ENCODE measurements at regions of chr12 and their contacts with region 1.

Region 1: GRCh38 chr12:54993161-54993835 is 8.7 kb upstream of the TESPA1 start:
- DNase-seq: peak; percentile 72
- H3K4me3 Mint-ChIP-seq: no peak overlapping the region
- H3K27ac Mint-ChIP-seq: no peak overlapping the region
- H3K4me1 Mint-ChIP-seq: peaks cover 41% of the 10 kb centered on the region
- H3K27me3 Mint-ChIP-seq: no peaks in the 10 kb centered on the region

Region 2: GRCh38 chr12:54631988-54632728 is 361.1 kb before region 1 on chr12:
- CTCF ChIA-PET with region 1: no interaction called
- intact Hi-C with region 1: no loop called
- DNase-seq: no peak
- H3K4me3 Mint-ChIP-seq: no peak overlapping the region
- H3K27ac Mint-ChIP-seq: no peak overlapping the region
- H3K4me1 Mint-ChIP-seq: no peaks in the 10 kb centered on the region
- H3K27me3 Mint-ChIP-seq: peaks cover 14% of the 10 kb centered on the region

Region 3: GRCh38 chr12:54749191-54749818 is 244.0 kb before region 1 on chr12:
- CTCF ChIA-PET with region 1: interaction called, 67 read pairs
- intact Hi-C with region 1: loop called (anchors 1 kb)
- DNase-seq: peak; percentile 58
- H3K4me3 Mint-ChIP-seq: no peak overlapping the region
- H3K27ac Mint-ChIP-seq: no peak overlapping the region
- H3K4me1 Mint-ChIP-seq: peaks cover 25% of the 10 kb centered on the region
- H3K27me3 Mint-ChIP-seq: no peaks in the 10 kb centered on the region

Region 4: GRCh38 chr12:54865683-54866324 is 127.5 kb before region 1 on chr12:
- CTCF ChIA-PET with region 1: interaction called, 13 read pairs
- intact Hi-C with region 1: no loop called
- DNase-seq: peak; percentile 42
- H3K4me3 Mint-ChIP-seq: no peak overlapping the region
- H3K27ac Mint-ChIP-seq: no peak overlapping the region
- H3K4me1 Mint-ChIP-seq: peaks cover 36% of the 10 kb centered on the region
- H3K27me3 Mint-ChIP-seq: peaks cover 25% of the 10 kb centered on the region

Region 5: DNA sequence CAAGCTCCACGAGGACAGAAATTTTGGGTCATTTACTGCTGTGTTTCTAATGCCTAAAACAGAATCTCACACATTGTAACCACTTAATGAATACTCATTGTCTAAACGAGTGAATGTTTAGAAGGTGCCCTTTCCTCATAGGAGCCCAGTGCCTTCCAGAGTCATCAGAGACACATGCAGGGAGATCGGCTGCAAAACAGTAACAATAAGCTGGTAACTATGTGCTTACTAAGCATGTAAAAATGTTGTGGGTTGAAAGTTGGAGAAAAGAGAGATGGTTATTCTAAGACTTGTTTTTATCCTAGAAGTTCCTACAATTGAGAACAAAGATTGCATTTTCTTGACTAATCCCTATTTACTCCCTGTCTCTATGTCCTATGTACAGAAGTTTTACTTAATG is 16.1 kb before region 1 on chr12:
- CTCF ChIA-PET with region 1: interaction called, 15 read pairs
- intact Hi-C with region 1: loop called (anchors 1 kb)
- DNase-seq: no peak
- H3K4me3 Mint-ChIP-seq: peak overlapping the region; percentile 61
- H3K27ac Mint-ChIP-seq: peak overlapping the region; percentile 67
- H3K4me1 Mint-ChIP-seq: peaks cover 87% of the 10 kb centered on the region
- H3K27me3 Mint-ChIP-seq: no peaks in the 10 kb centered on the region

Region 6: DNA sequence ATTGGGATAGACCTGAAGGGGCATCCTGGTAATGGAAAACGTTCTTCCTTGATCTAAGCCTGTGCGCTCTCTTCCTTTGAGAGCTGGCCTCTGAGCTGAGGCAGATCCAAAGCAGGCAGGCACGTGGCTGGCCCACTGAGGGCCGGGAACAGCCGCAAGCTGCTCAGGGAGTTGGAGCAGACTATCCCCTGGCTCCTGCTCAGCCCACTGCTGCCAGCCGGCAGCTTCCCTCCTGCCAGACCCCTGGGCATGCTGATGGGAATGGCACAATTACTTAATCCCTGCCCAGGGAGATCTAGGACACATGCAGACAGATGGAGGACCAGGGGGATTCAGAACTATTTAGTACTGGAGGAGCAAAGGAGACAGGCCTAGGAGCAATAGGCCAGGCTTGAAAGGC is 40.9 kb after region 1 on chr12:
- CTCF ChIA-PET with region 1: interaction called, 11 read pairs
- intact Hi-C with region 1: no loop called
- DNase-seq: no peak
- H3K4me3 Mint-ChIP-seq: no peak overlapping the region
- H3K27ac Mint-ChIP-seq: no peak overlapping the region
- H3K4me1 Mint-ChIP-seq: peaks cover 42% of the 10 kb centered on the region
- H3K27me3 Mint-ChIP-seq: no peaks in the 10 kb centered on the region

Region 7: DNA sequence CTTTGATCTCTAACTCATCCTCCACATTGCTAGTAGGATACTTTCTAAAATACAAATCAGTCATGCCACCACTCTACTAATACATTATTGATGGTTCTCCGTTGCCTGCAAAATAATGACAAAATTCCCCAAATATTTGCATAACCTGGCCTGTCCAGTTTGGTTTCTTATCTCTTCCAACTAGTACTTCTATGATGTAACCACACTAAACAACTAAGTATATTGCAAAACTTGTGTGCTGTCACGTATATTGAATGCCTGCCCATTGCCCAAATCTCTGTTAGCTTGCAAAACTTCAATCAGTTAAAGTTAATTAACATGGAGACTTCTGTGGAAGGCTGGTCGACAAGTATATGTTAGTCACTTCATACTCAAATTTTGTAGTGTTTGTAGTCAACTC is 257.6 kb after region 1 on chr12:
- CTCF ChIA-PET with region 1: no interaction called
- intact Hi-C with region 1: no loop called
- DNase-seq: no peak
- H3K4me3 Mint-ChIP-seq: no peak overlapping the region
- H3K27ac Mint-ChIP-seq: no peak overlapping the region
- H3K4me1 Mint-ChIP-seq: no peaks in the 10 kb centered on the region
- H3K27me3 Mint-ChIP-seq: peaks cover 21% of the 10 kb centered on the region